ENCODE measurements at regions of chr9 and their contacts with region 1.

Region 1: GRCh38 chr9:128580721-128581120 is 28.3 kb downstream of the SPTAN1 start:
- DNase-seq: no peak
- ATAC-seq: no peak
- H3K4me3 ChIP-seq: no peak overlapping the region
- H3K27ac ChIP-seq: no peak overlapping the region
- H3K4me1 ChIP-seq: no peaks in the 10 kb centered on the region
- H3K27me3 ChIP-seq: no peaks in the 10 kb centered on the region
- CTCF ChIP-seq: no peak
- POLR2A ChIP-seq: no peak
- RAD21 ChIP-seq: no peak

Region 2: DNA sequence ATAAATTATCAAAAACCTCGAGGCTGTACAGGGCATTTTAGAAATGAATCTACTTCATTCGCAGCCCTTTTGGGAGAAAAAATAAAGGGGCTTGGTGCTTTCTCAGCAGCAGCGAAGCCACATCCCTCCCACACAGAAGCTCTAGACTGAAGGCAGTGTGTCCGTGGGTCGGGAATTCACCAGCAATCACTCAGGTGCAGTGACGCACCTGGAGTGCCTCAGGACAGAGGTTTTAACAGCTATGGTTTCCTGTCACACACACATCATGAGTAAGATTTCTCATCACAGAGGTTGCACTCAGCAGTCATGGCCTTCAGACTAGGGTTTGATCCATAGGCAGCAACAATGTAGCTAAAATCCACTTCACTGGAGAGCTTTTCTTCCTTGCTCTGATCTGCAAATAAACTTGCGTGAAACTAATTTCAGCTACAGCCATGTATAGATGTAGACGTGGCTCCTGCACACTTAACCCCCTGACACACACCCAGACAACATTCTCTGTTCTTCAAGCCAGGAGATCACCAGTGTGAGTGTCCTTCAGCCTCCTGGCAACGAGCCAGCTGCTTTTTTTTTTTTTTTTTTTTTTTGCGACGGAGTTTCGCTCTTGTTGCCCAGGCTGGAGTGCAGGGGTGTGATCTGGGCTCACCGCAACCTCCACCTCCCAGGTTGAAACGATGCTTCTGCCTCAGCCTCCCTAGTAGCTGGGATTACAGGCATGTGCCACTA is 41.2 kb after region 1 on chr9:
- CTCF ChIA-PET with region 1: no interaction called
- POLR2A ChIA-PET with region 1: no interaction called
- dilution Hi-C with region 1: no loop called
- in situ Hi-C with region 1: no loop called
- intact Hi-C with region 1: loop called (anchors 5 kb)
- DNase-seq: no peak
- ATAC-seq: no peak
- H3K4me3 ChIP-seq: no peak overlapping the region
- H3K27ac ChIP-seq: no peak overlapping the region
- H3K4me1 ChIP-seq: no peaks in the 10 kb centered on the region
- H3K27me3 ChIP-seq: no peaks in the 10 kb centered on the region
- CTCF ChIP-seq: no peak
- POLR2A ChIP-seq: no peak
- RAD21 ChIP-seq: no peak

Measured in IMR-90 (cell line).